GM12878 (cell line): ENCODE measurements at regions of chr12 and their contacts with region 1.

Region 1: GRCh38 chr12:75977952-75978671 is 53.5 kb downstream of the PHLDA1 start:
- DNase-seq: peak; percentile 94
- ATAC-seq: peak; percentile 86
- H3K4me3 ChIP-seq: no peak overlapping the region
- H3K27ac ChIP-seq: peak overlapping the region; percentile 71
- H3K4me1 ChIP-seq: peaks cover 32% of the 10 kb centered on the region
- H3K27me3 ChIP-seq: no peaks in the 10 kb centered on the region
- CTCF ChIP-seq: no peak
- EP300 ChIP-seq: peak; percentile 97 to 98
- POLR2A ChIP-seq: no peak
- RAD21 ChIP-seq: peak; percentile 25; the same call in 1 of the 2 replicates

Region 2: GRCh38 chr12:75917083-75917482 is 61.0 kb before region 1 on chr12:
- CTCF ChIA-PET with region 1: interaction called, 3 read pairs
- POLR2A ChIA-PET with region 1: interaction called, 4 read pairs
- RAD21 ChIA-PET with region 1: interaction called, 5 read pairs
- SMC1A ChIA-PET with region 1: interaction called, 24 read pairs
- in situ Hi-C with region 1: no loop called
- intact Hi-C with region 1: no loop called
- DNase-seq: peak; percentile 17
- ATAC-seq: peak; percentile 93
- H3K4me3 ChIP-seq: no peak overlapping the region
- H3K27ac ChIP-seq: no peak overlapping the region
- H3K4me1 ChIP-seq: no peaks in the 10 kb centered on the region
- H3K27me3 ChIP-seq: no peaks in the 10 kb centered on the region
- CTCF ChIP-seq: no peak
- EP300 ChIP-seq: peak; percentile 24 to 70; a peak in 3 of 4 replicates
- POLR2A ChIP-seq: no peak
- RAD21 ChIP-seq: no peak

Region 3: GRCh38 chr12:75939016-75939642 is 39.0 kb before region 1 on chr12:
- CTCF ChIA-PET with region 1: interaction called, 13 read pairs
- POLR2A ChIA-PET with region 1: interaction called, 31 read pairs
- RAD21 ChIA-PET with region 1: interaction called, 82 read pairs
- SMC1A ChIA-PET with region 1: interaction called, 104 read pairs
- in situ Hi-C with region 1: no loop called
- intact Hi-C with region 1: loop called (anchors 2 kb)
- DNase-seq: no peak
- ATAC-seq: no peak
- H3K4me3 ChIP-seq: no peak overlapping the region
- H3K27ac ChIP-seq: no peak overlapping the region
- H3K4me1 ChIP-seq: peaks cover 14% of the 10 kb centered on the region
- H3K27me3 ChIP-seq: no peaks in the 10 kb centered on the region
- CTCF ChIP-seq: no peak
- EP300 ChIP-seq: no peak
- POLR2A ChIP-seq: no peak
- RAD21 ChIP-seq: no peak

Region 4: DNA sequence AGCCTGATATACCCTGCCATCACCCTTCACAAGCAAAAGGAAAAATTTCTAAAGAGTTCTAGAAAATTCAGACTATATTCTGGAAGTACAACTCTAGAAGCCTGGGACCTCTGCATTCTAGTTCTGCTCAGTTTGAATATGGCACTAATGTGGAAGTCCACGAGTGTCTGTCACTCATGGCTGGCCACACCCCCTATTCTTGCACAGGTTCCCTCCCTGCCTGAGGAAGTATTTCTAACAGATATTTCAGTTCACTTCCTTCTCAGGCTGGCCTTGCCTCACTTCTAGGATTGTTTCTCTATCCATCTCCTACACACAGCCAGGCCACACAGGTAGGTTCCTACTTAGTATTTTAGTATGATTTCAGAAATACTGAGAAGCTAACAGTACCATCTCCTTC is 14.0 kb before region 1 on chr12:
- CTCF ChIA-PET with region 1: interaction called, 7 read pairs
- POLR2A ChIA-PET with region 1: interaction called, 5 read pairs
- RAD21 ChIA-PET with region 1: interaction called, 18 read pairs
- SMC1A ChIA-PET with region 1: interaction called, 58 read pairs
- in situ Hi-C with region 1: no loop called
- intact Hi-C with region 1: no loop called
- DNase-seq: no peak
- ATAC-seq: peak; percentile 74
- H3K4me3 ChIP-seq: no peak overlapping the region
- H3K27ac ChIP-seq: no peak overlapping the region
- H3K4me1 ChIP-seq: no peaks in the 10 kb centered on the region
- H3K27me3 ChIP-seq: no peaks in the 10 kb centered on the region
- CTCF ChIP-seq: no peak
- EP300 ChIP-seq: no peak
- POLR2A ChIP-seq: no peak
- RAD21 ChIP-seq: no peak

Region 5: DNA sequence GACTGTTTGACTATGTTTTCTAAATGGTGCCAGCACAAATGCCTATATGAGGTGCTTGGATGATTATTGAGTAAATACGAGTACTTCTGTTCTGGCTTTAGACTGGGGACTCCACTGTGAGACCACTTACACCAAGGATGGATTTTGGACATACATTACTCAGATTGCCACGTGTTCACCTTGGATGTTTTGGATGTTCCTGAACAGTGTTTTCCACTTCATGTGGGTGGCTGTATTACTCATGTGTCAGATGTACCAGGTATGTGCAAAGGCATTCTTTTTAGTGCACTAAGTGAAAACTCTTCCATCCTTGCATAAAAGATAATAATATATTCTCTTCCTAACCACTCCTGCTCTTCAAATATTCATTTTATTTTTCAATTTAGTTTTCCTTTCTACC is 870.0 kb after region 1 on chr12:
- CTCF ChIA-PET with region 1: no interaction called
- POLR2A ChIA-PET with region 1: no interaction called
- RAD21 ChIA-PET with region 1: no interaction called
- SMC1A ChIA-PET with region 1: no interaction called
- in situ Hi-C with region 1: no loop called
- intact Hi-C with region 1: no loop called
- DNase-seq: no peak
- ATAC-seq: no peak
- H3K4me3 ChIP-seq: no peak overlapping the region
- H3K27ac ChIP-seq: no peak overlapping the region
- H3K4me1 ChIP-seq: no peaks in the 10 kb centered on the region
- H3K27me3 ChIP-seq: no peaks in the 10 kb centered on the region
- CTCF ChIP-seq: no peak
- EP300 ChIP-seq: no peak
- POLR2A ChIP-seq: no peak
- RAD21 ChIP-seq: no peak